ENCODE measurements at regions of chr12 and their contacts with region 1.

Region 1: DNA sequence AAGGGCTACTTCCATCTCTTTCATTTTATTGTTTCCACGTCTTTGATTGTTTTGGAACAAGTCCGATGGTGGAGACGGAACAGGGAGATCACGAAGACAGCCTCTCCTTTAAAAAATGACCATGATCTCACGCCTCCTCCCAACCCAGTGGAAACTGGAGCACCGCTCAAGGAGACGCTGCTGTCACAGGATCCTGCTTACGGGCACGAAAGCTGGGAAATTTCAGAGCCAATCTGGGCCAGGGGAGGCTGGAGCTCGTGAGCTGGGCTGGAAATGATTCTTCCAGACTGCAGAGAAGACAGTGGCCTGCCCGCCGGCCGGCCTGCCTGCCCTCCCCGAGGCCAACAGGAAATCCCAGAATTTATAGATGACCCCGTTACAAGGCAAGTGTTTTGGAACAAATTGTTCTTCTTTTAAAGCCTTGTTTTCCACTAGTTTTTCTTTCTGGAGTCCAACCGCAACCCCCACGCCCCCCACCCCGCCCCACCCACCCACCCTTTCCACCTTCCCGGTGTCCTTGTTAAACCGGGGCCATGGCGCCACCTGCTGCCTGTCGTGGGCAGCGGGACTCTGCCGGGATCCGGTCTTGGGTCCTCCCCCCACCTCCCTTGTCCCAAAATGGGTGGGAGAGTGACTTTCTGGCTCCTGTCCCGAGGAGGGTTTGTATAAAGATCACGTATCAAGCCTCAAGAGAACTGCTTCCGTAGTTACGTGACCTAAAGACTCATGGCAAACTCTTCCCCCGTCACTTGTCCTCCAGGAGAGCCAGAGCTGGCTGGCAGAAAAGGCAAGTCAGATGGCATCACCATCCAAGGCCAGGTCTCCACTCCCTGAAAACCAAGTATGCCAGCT is 40.3 kb downstream of the MAP1LC3B2 start:
- DNase-seq: peak; percentile 26 to 94 (median 70)

Region 2: DNA sequence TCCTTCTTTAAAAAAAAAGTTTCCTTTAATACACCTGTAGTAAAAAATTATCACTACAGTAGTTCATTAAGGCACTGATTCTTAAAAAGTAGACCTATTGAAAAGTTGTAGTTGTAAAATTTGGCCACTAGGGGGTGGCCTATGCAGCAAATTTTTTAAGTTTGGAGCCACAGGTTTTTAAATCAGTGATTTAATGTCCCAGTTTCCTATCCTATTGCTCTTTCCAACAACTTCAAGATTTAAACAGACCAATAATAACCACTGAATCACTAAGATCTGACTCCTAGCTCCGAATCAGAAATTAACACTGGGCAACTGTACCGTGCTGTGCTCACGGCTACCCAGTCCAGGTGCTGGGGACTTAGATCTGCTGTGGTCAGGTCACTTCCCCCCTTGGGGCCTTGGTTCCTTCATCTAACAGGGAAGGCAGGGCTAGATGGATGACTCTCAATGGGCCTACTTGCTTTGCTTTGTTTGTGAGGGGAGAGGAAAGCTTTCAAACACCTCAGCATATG is 601.3 kb before region 1 on chr12:
- intact Hi-C with region 1: loop called (anchors 5 kb)
- DNase-seq: no peak

Region 3: GRCh38 chr12:116642683-116643082 is 43.2 kb after region 1 on chr12:
- intact Hi-C with region 1: no loop called
- DNase-seq: no peak